ENCODE measurements at regions of chr3 and their contacts with region 1.

Region 1: DNA sequence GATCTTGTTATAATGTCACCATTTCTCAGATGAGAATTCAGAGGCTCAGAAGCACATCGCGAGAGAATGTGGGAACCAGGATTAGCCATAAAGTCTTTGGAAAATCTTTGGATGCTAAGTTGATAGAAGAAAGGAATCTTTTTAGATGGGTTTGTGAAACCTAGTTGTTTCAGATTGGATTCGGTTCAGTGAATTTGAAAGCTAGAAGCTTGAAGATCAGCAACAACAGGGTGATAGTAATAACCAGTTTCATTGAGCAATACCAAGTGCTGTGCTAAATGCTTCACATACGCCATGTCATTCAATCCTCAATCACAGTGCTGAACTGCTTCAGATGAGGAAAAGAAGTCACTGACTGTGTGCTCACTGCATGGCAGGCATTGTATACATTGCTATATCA is 47.4 kb upstream of the MITF start:
- DNase-seq: no peak
- ATAC-seq: no peak

Region 2: DNA sequence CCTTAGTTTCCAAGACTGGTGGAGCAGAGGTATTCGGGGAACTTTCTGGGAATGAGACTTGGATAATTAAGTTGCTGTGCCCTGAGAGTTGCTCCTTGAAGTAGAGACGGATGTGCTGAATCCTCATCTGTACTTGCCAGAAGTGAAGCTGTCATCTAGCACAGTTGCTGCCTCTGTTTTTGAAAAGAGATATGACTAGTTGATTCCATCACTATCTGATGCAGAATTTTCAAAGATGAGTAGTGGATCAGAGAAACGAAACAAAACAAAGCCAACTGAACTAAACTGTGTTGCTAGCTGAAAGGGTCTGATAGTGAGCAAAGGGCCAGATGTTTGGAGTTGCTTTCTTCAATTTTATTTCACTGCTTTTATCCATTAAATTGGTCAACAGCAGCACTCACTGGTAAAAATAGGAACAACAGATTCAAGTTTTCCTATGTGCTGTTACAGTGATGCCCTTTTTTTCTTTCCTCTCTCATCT is 100.1 kb after region 1 on chr3:
- intact Hi-C with region 1: loop called (anchors 5 kb)
- DNase-seq: no peak
- ATAC-seq: peak; percentile 72

Region 3: GRCh38 chr3:69855436-69856162 is 163.7 kb after region 1 on chr3:
- intact Hi-C with region 1: loop called (anchors 5 kb)
- DNase-seq: no peak
- ATAC-seq: peak; percentile 69

Region 4: GRCh38 chr3:69948246-69948862 is 256.5 kb after region 1 on chr3:
- intact Hi-C with region 1: loop called (anchors 5 kb)
- DNase-seq: no peak
- ATAC-seq: no peak

Region 5: DNA sequence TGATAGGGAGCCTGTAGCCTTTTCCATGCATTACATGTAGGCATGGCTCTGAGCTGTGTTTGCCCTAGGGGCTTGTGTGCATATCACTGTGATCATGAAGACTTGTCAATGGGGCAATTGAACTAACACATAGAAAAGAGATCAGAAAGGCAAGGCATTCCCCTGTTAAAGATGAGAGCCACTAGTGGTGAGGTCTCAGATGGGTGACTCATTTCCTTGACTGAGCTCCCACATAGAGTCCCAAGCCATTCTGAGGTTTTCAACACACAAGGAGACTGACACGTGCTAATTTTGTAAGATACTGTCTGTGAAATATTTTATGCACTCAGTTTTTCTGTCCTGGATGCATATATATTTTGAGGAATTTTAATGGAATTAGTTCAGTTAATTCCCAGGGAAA is 361.4 kb after region 1 on chr3:
- intact Hi-C with region 1: no loop called
- DNase-seq: no peak
- ATAC-seq: no peak